Activated CD8-positive, alpha-beta T cell treated with anti-CD3 and anti-CD28 coated beads for 36 hours (primary cell): ENCODE measurements at regions of chr5 and their contacts with region 1.

Region 1: GRCh38 chr5:178130604-178131485 is at the start of gene RMND5B:
- DNase-seq: peak; percentile 81
- ATAC-seq: peak; percentile 84
- H3K4me3 Mint-ChIP-seq: peak within 1 kb of the TSS; percentile 72
- H3K27ac Mint-ChIP-seq: peak within 1 kb of the TSS; percentile 80
- H3K4me1 Mint-ChIP-seq: peaks cover 15% of the 10 kb centered on the region
- H3K27me3 Mint-ChIP-seq: no peaks in the 10 kb centered on the region
- CTCF ChIP-seq: no peak
- total RNA-seq, gene RMND5B: 32.9 to 33.4 TPM

Region 2: GRCh38 chr5:178090858-178091540 is 39.8 kb before region 1 on chr5:
- CTCF ChIA-PET with region 1: no interaction called
- POLR2A ChIA-PET with region 1: no interaction called
- intact Hi-C with region 1: no loop called
- DNase-seq: peak; percentile 62
- ATAC-seq: peak; percentile 60
- H3K4me3 Mint-ChIP-seq: no peak overlapping the region
- H3K27ac Mint-ChIP-seq: no peak overlapping the region
- H3K4me1 Mint-ChIP-seq: peaks cover 21% of the 10 kb centered on the region
- H3K27me3 Mint-ChIP-seq: peaks cover 1% of the 10 kb centered on the region
- CTCF ChIP-seq: no peak

Region 3: DNA sequence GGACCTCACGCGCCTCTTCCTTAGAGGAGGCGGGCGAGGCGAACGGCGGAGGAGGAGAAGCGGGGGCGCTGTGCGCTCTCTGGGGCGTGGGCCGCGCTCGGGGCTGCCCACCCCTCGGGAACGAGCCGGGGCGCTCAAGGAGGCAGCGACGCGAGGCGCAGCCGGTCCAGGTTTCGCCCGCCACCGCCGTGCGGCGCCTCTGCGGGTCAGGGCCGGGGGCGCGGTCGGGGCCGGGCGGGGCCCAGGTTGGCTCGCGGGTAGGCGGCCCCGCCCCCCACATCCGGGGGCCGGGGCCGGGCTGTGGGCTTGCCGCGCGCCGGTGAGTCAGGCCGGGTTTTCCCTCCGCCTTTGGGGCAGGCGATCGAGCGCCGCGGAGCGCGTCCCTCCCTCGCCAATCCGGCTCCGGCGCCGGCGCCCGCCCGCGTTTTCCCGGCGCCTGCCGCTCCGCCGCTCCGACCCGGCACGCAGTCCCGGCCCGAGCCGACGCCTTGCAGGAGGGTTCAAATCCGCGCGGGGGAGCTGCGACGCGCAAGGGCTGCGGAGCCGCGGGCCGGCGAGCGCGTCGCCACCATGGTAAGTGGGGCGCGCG is 17.6 kb before region 1 on chr5 and contains the start of gene N4BP3:
- CTCF ChIA-PET with region 1: interaction called, 3 read pairs
- POLR2A ChIA-PET with region 1: interaction called, 44 read pairs
- intact Hi-C with region 1: no loop called
- DNase-seq: peak; percentile 88
- ATAC-seq: peak; percentile 63
- H3K4me3 Mint-ChIP-seq: peak within 1 kb of the TSS; percentile 98
- H3K27ac Mint-ChIP-seq: peak within 1 kb of the TSS; percentile 95
- H3K4me1 Mint-ChIP-seq: peaks cover 23% of the 10 kb centered on the region
- H3K27me3 Mint-ChIP-seq: no peaks in the 10 kb centered on the region
- CTCF ChIP-seq: no peak
- total RNA-seq, gene N4BP3: 33.2 to 33.4 TPM